Activated CD4-positive, alpha-beta T cell treated with anti-CD3 and anti-CD28 coated beads for 36 hours (primary cell): ENCODE measurements at regions of chrX and their contacts with region 1.

Region 1: GRCh38 chrX:38458071-38458470 is 103.3 kb upstream of the TSPAN7 start:
- DNase-seq: no peak
- ATAC-seq: no peak
- H3K4me3 Mint-ChIP-seq: no peak overlapping the region
- H3K27ac Mint-ChIP-seq: no peak overlapping the region
- H3K4me1 Mint-ChIP-seq: no peaks in the 10 kb centered on the region
- H3K27me3 Mint-ChIP-seq: peaks cover 3% of the 10 kb centered on the region

Region 2: DNA sequence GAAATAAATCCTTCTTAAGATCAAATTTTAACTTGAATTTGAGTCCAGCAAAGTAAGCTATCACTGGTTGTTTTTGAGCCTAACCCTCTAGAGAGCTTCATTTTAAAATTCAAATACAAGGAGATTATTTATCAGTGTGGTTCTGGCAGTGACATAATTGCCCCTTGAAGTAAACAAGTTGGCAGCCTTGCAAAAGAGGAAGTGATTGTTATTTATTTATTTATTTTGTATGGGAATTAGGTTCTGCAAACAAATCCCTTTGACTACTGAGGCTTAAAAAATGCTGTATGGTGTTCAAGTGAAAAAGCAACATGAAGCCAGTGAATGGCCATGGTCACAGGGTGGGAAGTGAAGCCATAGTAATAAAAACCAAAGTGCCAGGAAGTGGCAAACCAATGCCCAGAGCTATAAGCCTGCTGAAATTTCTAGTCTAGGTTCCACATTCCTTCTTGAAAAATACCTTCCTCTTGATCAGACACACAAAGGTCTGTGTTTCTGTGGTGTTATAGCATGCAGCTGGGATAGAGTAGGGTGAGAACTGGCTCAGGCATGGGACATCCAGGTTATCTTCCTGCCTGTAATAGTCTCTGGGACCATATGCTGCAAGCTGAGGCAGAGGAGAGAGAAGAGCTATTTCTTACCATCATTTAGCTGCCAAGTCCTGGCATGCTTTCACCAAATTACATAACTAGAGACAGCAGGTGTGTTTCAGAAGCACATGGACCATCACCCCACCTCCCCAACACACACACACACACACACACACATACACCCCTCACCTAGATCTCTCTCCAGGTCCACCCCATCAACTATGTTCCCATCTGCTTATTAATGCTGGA is 56.2 kb after region 1 on chrX:
- CTCF ChIA-PET with region 1: no interaction called
- POLR2A ChIA-PET with region 1: no interaction called
- intact Hi-C with region 1: loop called in 1 of 2 experiments (anchors 10 kb)
- DNase-seq: no peak
- ATAC-seq: no peak
- H3K4me3 Mint-ChIP-seq: no peak overlapping the region
- H3K27ac Mint-ChIP-seq: no peak overlapping the region
- H3K4me1 Mint-ChIP-seq: no peaks in the 10 kb centered on the region
- H3K27me3 Mint-ChIP-seq: no peaks in the 10 kb centered on the region

Region 3: GRCh38 chrX:38941675-38942074 is 483.6 kb after region 1 on chrX:
- CTCF ChIA-PET with region 1: no interaction called
- POLR2A ChIA-PET with region 1: no interaction called
- intact Hi-C with region 1: no loop called
- DNase-seq: no peak
- ATAC-seq: no peak
- H3K4me3 Mint-ChIP-seq: no peak overlapping the region
- H3K27ac Mint-ChIP-seq: no peak overlapping the region
- H3K4me1 Mint-ChIP-seq: no peaks in the 10 kb centered on the region
- H3K27me3 Mint-ChIP-seq: no peaks in the 10 kb centered on the region